ENCODE measurements at regions of chr9 and their contacts with region 1.

Region 1: GRCh38 chr9:6681147-6681956 is 35.8 kb upstream of the GLDC start:
- DNase-seq: peak; percentile 96
- ATAC-seq: peak; percentile 88
- H3K4me3 Mint-ChIP-seq: peak overlapping the region; percentile 88
- H3K27ac Mint-ChIP-seq: peak overlapping the region; percentile 99
- H3K4me1 Mint-ChIP-seq: peaks cover 19% of the 10 kb centered on the region
- H3K27me3 Mint-ChIP-seq: no peaks in the 10 kb centered on the region

Region 2: GRCh38 chr9:6353851-6354686 is 327.3 kb before region 1 on chr9:
- CTCF ChIA-PET with region 1: no interaction called
- POLR2A ChIA-PET with region 1: no interaction called
- intact Hi-C with region 1: loop called in 1 of 2 experiments (anchors 5 kb)
- DNase-seq: peak; percentile 27
- ATAC-seq: peak; percentile 89
- H3K4me3 Mint-ChIP-seq: no peak overlapping the region
- H3K27ac Mint-ChIP-seq: peak overlapping the region; percentile 37
- H3K4me1 Mint-ChIP-seq: peaks cover 18% of the 10 kb centered on the region
- H3K27me3 Mint-ChIP-seq: peaks cover 4% of the 10 kb centered on the region

Region 3: DNA sequence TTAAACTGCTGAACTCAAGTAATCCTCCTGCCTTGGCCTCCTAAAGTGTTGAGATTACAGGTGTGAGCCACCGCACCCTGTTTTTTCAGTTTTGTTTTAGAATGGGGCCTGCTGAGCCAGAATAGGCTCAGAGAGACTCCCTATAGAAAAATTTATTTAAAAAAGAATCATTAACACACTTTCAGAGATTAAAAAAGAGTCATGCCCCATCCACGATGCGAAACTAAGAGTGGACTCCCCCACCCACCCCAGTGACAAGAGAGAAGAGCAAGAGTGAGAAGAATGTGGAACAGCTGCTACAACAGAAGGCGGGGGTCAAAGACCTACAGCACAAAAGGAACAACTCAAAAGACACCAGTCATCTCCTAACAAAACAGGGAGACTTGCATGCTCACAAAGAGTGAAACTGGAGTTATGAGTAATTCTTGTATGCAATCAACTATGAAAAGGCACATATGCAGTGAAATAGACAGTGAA is 83.1 kb before region 1 on chr9:
- CTCF ChIA-PET with region 1: no interaction called
- POLR2A ChIA-PET with region 1: no interaction called
- intact Hi-C with region 1: loop called in 1 of 2 experiments (anchors 1 kb)
- DNase-seq: peak; percentile 66
- ATAC-seq: peak; percentile 95
- H3K4me3 Mint-ChIP-seq: no peak overlapping the region
- H3K27ac Mint-ChIP-seq: peak overlapping the region; percentile 80
- H3K4me1 Mint-ChIP-seq: peaks cover 10% of the 10 kb centered on the region
- H3K27me3 Mint-ChIP-seq: peaks cover 2% of the 10 kb centered on the region

Region 4: DNA sequence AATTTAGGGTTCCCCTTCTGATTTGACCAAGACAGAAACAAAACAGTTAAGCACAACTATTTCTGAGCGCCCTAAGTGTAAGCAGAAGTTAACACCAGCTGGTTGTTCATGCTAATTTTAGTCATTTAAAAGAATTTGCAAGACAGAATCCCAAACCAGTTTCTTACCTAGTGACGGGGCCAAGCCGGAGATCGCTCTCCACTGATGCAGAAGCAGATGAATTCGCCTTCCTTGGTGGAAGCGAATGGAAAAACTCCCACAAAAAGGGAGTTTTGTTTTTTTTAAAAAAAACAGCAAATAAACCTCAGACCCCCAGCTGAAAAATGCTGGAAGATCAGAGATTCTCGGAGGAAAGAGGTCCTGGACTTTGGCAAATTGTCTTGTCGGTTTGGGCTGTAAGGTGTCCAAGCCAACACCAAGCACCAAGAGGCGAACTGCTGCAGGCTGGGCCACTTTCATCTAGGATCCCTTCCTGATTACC is 11.6 kb after region 1 on chr9:
- CTCF ChIA-PET with region 1: no interaction called
- POLR2A ChIA-PET with region 1: no interaction called
- intact Hi-C with region 1: no loop called
- DNase-seq: no peak
- ATAC-seq: no peak
- H3K4me3 Mint-ChIP-seq: no peak overlapping the region
- H3K27ac Mint-ChIP-seq: no peak overlapping the region
- H3K4me1 Mint-ChIP-seq: no peaks in the 10 kb centered on the region
- H3K27me3 Mint-ChIP-seq: no peaks in the 10 kb centered on the region

Region 5: GRCh38 chr9:6703898-6704639 is 22.7 kb after region 1 on chr9:
- CTCF ChIA-PET with region 1: interaction called, 11 read pairs
- POLR2A ChIA-PET with region 1: interaction called, 18 read pairs
- intact Hi-C with region 1: loop called (anchors 1 kb)
- DNase-seq: peak; percentile 93
- ATAC-seq: peak; percentile 88
- H3K4me3 Mint-ChIP-seq: peak overlapping the region; percentile 75
- H3K27ac Mint-ChIP-seq: peak overlapping the region; percentile 77
- H3K4me1 Mint-ChIP-seq: peaks cover 14% of the 10 kb centered on the region
- H3K27me3 Mint-ChIP-seq: no peaks in the 10 kb centered on the region

Region 6: GRCh38 chr9:6723881-6724420 is 42.6 kb after region 1 on chr9:
- CTCF ChIA-PET with region 1: no interaction called
- POLR2A ChIA-PET with region 1: no interaction called
- intact Hi-C with region 1: no loop called
- DNase-seq: no peak
- ATAC-seq: no peak
- H3K4me3 Mint-ChIP-seq: no peak overlapping the region
- H3K27ac Mint-ChIP-seq: no peak overlapping the region
- H3K4me1 Mint-ChIP-seq: no peaks in the 10 kb centered on the region
- H3K27me3 Mint-ChIP-seq: no peaks in the 10 kb centered on the region

Region 7: GRCh38 chr9:7799234-7799943 is 1118.0 kb after region 1 on chr9 and contains the start of gene DMAC1:
- CTCF ChIA-PET with region 1: no interaction called
- POLR2A ChIA-PET with region 1: no interaction called
- intact Hi-C with region 1: loop called in 1 of 2 experiments (anchors 5 kb)
- DNase-seq: peak; percentile 86
- ATAC-seq: peak; percentile 88
- H3K4me3 Mint-ChIP-seq: peak within 1 kb of the TSS; percentile 94
- H3K27ac Mint-ChIP-seq: peak within 1 kb of the TSS; percentile 96
- H3K4me1 Mint-ChIP-seq: peaks cover 27% of the 10 kb centered on the region
- H3K27me3 Mint-ChIP-seq: no peaks in the 10 kb centered on the region
- total RNA-seq, gene DMAC1: 34.5 to 49.3 TPM

Measured in activated CD4-positive, alpha-beta T cell treated with anti-CD3 and anti-CD28 coated beads for 36 hours (primary cell).